ENCODE measurements at regions of chr5 and their contacts with region 1.

Region 1: GRCh38 chr5:135437796-135438560 is 9.2 kb downstream of the DCANP1 start:
- DNase-seq: peak; percentile 92 to 93
- ATAC-seq: peak; percentile 71 to 73
- H3K4me3 ChIP-seq: no peak overlapping the region
- H3K27ac ChIP-seq: peak overlapping the region; percentile 33 to 75 (median 62)
- H3K4me1 ChIP-seq: peaks cover 29 to 41% of the 10 kb centered on the region in 2 donors
- H3K27me3 ChIP-seq: no peaks in the 10 kb centered on the region
- CTCF ChIP-seq: no peak
- POLR2A ChIP-seq: no peak

Region 2: GRCh38 chr5:135053278-135053677 is 384.7 kb before region 1 on chr5:
- in situ Hi-C with region 1: no loop called
- intact Hi-C with region 1: loop called (anchors 10 kb)
- DNase-seq: no peak
- ATAC-seq: no peak
- H3K4me3 ChIP-seq: no peak overlapping the region
- H3K27ac ChIP-seq: no peak overlapping the region
- H3K4me1 ChIP-seq: peaks cover 15 to 22% of the 10 kb centered on the region in 2 donors
- H3K27me3 ChIP-seq: peaks cover 0 to 4% (median 0%) of the 10 kb centered on the region in 3 donors
- CTCF ChIP-seq: no peak
- POLR2A ChIP-seq: no peak

Region 3: DNA sequence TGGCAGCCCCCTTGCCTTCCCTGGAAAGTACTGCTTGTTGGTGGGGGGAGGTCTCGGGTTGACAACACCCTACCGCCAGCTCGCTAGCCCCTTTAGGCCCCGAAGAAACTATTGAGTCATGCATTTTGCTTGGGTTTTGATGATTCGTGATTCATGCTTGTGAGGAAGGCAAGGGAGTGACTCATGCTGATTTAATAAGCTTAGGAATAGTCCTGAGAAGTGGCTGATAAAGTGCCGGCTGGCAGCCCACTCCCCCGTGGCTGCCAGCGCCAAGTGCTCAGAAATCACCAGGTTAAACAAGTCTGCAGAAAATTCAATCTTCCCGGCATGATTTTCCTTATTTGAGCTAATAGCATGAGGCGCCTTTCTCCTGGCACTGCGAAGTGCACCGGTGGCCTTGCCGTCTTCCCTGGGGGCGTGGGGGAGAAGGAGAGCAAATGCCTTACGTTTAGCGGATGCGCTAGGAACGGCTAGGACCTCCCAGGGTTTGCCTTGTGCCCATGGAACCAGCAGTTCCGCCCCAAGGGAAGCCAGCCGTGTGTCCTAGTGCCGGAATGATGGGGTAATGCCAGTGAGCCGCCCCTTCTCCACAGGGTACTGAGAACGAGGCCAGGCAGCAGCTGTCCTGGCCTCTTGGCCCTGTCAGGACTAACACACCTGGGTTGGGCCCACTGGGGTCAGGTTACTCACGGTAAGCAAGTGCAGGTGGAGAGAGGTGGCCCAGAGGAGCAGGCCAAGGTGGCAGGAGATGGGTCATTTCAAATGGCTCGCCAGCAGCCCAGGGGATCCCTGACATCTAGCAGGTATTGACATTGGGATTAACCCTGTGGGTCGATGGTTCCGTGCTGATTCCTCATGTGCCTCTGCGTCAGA is 190.8 kb before region 1 on chr5:
- in situ Hi-C with region 1: no loop called
- intact Hi-C with region 1: loop called (anchors 5 kb)
- DNase-seq: no peak
- ATAC-seq: peak in 1 of 2 donors; percentile 25
- H3K4me3 ChIP-seq: no peak overlapping the region
- H3K27ac ChIP-seq: peak overlapping the region in 3 of 4 donors; percentile 30 to 93 (median 92)
- H3K4me1 ChIP-seq: peaks cover 58% of the 10 kb centered on the region in 2 donors
- H3K27me3 ChIP-seq: no peaks in the 10 kb centered on the region
- CTCF ChIP-seq: no peak
- POLR2A ChIP-seq: no peak

Region 4: GRCh38 chr5:135337064-135337463 is 100.9 kb before region 1 on chr5:
- in situ Hi-C with region 1: no loop called
- intact Hi-C with region 1: no loop called
- DNase-seq: no peak
- ATAC-seq: no peak
- H3K4me3 ChIP-seq: no peak overlapping the region
- H3K27ac ChIP-seq: no peak overlapping the region
- H3K4me1 ChIP-seq: no peaks in the 10 kb centered on the region
- H3K27me3 ChIP-seq: no peaks in the 10 kb centered on the region
- CTCF ChIP-seq: no peak
- POLR2A ChIP-seq: no peak

Region 5: GRCh38 chr5:135373736-135374515 is 64.1 kb before region 1 on chr5:
- in situ Hi-C with region 1: no loop called
- intact Hi-C with region 1: loop called (anchors 2 kb)
- DNase-seq: peak; percentile 81 to 86
- ATAC-seq: peak; percentile 93 to 95
- H3K4me3 ChIP-seq: peak overlapping the region in 1 of 4 donors; percentile 12
- H3K27ac ChIP-seq: peak overlapping the region; percentile 89 to 93 (median 90)
- H3K4me1 ChIP-seq: peaks cover 32 to 35% of the 10 kb centered on the region in 2 donors
- H3K27me3 ChIP-seq: no peaks in the 10 kb centered on the region
- CTCF ChIP-seq: no peak
- POLR2A ChIP-seq: no peak

Region 6: DNA sequence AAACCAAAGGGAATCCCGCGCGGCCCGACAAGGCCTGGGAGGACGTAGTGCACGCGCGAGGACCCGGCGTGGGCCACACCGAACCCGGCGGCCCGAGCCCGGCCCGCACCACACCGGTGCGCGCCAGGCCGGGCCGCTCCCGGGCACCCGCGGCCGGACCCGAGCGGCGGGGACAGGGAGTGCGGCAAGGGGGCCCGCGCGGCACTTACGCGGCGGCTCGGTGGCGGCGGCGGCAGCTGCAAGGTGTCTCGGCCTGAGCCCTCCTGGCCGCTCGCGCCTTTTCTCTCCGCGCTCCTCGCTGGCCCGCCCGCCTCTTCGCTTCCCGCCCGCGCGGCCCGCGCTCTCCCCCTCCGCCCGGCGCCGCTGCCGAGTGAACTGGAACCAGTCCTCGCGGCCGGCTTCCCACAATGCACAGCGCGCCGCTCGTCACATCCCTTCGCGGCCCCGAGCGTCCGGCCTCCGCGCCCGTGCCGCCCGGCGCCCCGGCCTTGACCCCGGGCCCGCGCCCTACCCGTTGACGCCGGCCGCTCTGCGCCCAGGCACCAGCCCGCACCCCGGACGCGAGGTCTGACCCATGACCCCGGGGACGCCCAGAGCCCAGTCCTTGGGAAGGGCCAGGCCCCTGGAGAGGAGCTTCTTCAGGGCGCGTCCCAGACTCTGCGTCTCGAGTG is 39.0 kb before region 1 on chr5 and contains the start of gene MACROH2A1:
- in situ Hi-C with region 1: no loop called
- intact Hi-C with region 1: loop called (anchors 2 kb)
- DNase-seq: peak; percentile 70 to 84
- ATAC-seq: peak; percentile 80 to 93
- H3K4me3 ChIP-seq: peak within 1 kb of the TSS; percentile 70 to 96 (median 81)
- H3K27ac ChIP-seq: peak within 1 kb of the TSS; percentile 76 to 93 (median 82)
- H3K4me1 ChIP-seq: peaks cover 39 to 46% of the 10 kb centered on the region in 2 donors
- H3K27me3 ChIP-seq: no peaks in the 10 kb centered on the region
- CTCF ChIP-seq: peak in 4 of 5 experiments; percentile 10 to 29 (median 15)
- POLR2A ChIP-seq: peak; percentile 95 to 97
- total RNA-seq, gene MACROH2A1: 104 to 167 (median 136) TPM

Region 7: DNA sequence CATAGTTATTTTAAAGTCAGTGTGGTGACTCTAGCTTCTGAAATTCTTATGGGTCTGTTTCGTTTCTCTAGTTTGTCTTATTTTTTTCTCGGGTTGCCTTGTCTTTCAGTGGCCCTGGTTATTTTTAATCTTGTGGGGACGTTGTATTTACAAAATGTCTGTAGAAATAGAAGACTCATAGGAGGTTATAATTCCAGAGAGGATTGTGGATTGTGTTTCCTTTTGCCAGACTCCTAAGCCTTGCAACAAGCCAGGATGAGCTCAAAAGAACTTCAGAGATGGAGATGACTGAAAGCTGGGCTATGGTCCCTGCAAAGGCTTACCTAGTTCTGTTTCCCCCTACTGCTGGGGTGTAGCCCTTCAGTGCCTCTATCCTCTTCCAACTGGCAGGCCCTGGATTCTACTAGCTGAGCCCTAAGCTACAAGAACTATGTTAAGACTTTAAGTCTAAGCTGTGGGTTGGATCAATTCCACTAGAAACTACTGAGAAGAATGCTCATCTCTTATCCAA is 549.0 kb after region 1 on chr5:
- in situ Hi-C with region 1: no loop called
- intact Hi-C with region 1: no loop called
- DNase-seq: no peak
- ATAC-seq: peak; percentile 58 to 76
- H3K4me3 ChIP-seq: no peak overlapping the region
- H3K27ac ChIP-seq: peak overlapping the region; percentile 23 to 53 (median 42)
- H3K4me1 ChIP-seq: no peaks in the 10 kb centered on the region
- H3K27me3 ChIP-seq: no peaks in the 10 kb centered on the region
- CTCF ChIP-seq: no peak
- POLR2A ChIP-seq: no peak

Region 8: DNA sequence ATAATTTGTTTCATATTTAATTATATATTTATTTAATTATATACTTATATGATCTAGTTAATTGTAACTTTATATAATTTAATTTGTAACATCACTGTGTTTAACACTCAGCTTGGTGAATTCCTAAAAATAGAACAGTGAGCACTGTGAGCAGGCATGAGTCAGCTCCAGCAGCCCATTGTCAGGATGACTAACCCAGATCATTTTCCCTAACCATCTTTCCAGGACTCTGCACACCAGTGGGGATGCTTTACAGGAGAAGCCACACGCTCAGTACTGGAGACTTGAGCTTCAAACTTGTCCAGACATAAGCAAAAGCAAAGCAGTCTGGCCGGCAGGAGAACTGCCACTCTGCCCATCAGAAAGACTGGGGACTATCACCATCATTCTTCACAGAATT is 1373.6 kb after region 1 on chr5:
- in situ Hi-C with region 1: no loop called
- intact Hi-C with region 1: loop called (anchors 5 kb)
- DNase-seq: peak; percentile 57 to 76
- ATAC-seq: peak; percentile 95 to 97
- H3K4me3 ChIP-seq: no peak overlapping the region
- H3K27ac ChIP-seq: peak overlapping the region; percentile 84 to 86 (median 85)
- H3K4me1 ChIP-seq: peaks cover 16 to 25% of the 10 kb centered on the region in 2 donors
- H3K27me3 ChIP-seq: no peaks in the 10 kb centered on the region
- CTCF ChIP-seq: no peak
- POLR2A ChIP-seq: peak in 1 of 2 donors; percentile 39

Measured in gastrocnemius medialis (tissue), 4 donors.